HAP-1 (cell line): ENCODE measurements at regions of chr5 and their contacts with region 1.

Region 1: DNA sequence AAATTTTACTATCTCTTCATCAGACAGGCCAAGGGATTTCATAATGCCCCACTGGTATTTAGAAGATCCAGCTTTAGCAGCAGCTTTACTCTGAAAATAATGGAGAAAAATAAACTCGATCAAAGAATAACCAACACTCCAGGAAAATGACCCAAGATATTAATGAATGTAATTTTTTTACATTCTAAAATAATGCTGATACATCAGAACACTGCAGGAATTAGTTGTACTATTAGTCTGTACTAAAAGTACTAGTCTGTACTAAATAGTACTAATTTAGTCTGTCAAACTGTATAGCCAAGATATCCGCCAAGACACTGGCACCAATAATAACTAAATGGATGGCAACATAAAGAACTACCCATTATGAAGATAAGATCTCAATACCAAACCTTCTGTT is 18.1 kb downstream of the LARS1 start:
- DNase-seq: no peak
- H3K4me3 ChIP-seq: no peak overlapping the region
- H3K4me1 ChIP-seq: no peaks in the 10 kb centered on the region
- H3K27me3 ChIP-seq: no peaks in the 10 kb centered on the region

Region 2: DNA sequence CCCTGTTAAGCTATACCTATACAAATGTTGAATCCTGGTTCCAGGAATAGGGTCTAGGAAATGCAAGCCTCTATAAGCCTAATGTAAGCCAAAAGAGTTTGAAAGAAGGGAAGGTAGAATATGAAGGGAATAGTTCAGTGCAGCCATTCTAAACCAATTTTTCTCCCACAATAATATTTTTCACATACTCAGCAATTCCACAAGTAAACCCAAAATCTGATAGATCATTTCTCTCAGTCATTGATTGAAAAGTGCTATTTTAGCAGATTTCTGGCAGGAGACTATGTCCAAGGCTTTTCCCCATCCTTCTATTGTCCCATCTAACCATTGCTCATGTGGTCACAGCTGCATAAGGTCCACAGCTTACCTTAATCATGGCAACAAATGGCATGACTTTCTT is 38.3 kb before region 1 on chr5:
- in situ Hi-C with region 1: loop called (anchors 5 kb)
- DNase-seq: no peak
- H3K4me3 ChIP-seq: no peak overlapping the region
- H3K4me1 ChIP-seq: peaks cover 3% of the 10 kb centered on the region
- H3K27me3 ChIP-seq: no peaks in the 10 kb centered on the region

Region 3: DNA sequence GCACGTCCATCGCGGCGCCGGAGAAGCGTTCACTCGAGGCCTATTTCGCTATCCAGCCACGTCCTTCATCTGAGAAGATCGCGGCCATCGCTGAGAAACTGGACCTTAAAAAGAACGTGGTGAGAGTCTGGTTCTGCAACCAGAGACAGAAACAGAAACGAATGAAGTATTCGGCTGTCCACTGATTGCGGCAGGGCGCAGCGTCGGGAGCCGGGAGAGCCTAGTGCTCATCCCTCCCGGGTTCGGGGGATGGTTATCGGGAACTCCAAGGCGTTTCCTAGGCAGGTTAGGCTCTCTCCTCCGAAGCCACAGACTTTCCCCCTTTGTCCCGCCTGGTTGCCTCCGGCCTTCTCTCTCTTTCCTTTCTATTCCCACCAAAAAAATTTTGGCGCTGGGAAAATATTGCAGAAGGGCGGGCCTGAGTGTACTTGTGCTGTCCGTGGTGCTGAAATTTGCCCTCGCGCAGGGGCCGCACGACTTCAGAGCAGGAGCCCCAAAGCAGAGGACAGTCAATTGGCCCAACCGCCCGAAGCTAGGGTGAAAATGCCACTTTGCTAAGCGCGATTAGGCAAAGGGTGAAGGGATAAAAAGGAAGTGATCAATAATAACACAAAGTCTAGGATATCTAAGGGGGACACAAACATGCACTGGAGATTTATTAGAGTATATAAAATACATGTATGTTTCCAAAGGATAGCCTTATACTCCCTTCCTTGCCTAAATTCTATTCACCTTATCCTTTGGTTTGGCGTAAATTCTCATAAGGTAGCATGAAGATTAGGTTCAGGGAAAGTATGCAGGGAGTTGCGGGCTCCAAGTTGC is 176.1 kb after region 1 on chr5:
- in situ Hi-C with region 1: no loop called
- DNase-seq: peak; percentile 39 to 81
- H3K4me3 ChIP-seq: no peak overlapping the region
- H3K4me1 ChIP-seq: no peaks in the 10 kb centered on the region
- H3K27me3 ChIP-seq: peaks cover 81% of the 10 kb centered on the region